ENCODE measurements at regions of chr6 and their contacts with region 1.

Region 1: DNA sequence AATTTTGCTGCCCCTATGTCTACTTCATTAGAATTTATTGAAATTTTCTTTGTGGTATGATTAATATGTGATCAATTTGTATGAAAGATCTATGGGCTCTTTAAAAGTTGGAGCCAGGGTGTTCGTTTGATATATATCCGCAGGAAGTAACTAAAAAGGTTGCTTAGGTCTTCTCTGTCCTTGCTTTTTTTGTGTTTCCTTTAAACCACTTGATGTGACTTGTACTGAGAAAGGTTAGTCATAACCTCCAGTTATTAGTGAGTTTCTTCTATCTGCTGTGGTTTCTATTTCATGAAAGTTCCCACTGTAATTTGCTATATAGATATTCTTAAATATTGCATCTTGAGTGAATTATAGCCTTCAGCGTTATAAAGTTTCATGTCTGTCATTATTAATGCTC is 585.3 kb upstream of the ARID1B start:
- DNase-seq: no peak
- ATAC-seq: peak; percentile 87
- H3K4me3 Mint-ChIP-seq: peak overlapping the region; percentile 26
- H3K27ac Mint-ChIP-seq: peak overlapping the region; percentile 74
- H3K4me1 Mint-ChIP-seq: peaks cover 42% of the 10 kb centered on the region
- H3K27me3 Mint-ChIP-seq: no peaks in the 10 kb centered on the region

Region 2: GRCh38 chr6:156174031-156174890 is 17.6 kb before region 1 on chr6:
- CTCF ChIA-PET with region 1: no interaction called
- POLR2A ChIA-PET with region 1: no interaction called
- intact Hi-C with region 1: loop called (anchors 1 kb)
- DNase-seq: peak; percentile 73
- ATAC-seq: peak; percentile 95
- H3K4me3 Mint-ChIP-seq: peak overlapping the region; percentile 9
- H3K27ac Mint-ChIP-seq: peak overlapping the region; percentile 88
- H3K4me1 Mint-ChIP-seq: peaks cover 27% of the 10 kb centered on the region
- H3K27me3 Mint-ChIP-seq: no peaks in the 10 kb centered on the region

Region 3: DNA sequence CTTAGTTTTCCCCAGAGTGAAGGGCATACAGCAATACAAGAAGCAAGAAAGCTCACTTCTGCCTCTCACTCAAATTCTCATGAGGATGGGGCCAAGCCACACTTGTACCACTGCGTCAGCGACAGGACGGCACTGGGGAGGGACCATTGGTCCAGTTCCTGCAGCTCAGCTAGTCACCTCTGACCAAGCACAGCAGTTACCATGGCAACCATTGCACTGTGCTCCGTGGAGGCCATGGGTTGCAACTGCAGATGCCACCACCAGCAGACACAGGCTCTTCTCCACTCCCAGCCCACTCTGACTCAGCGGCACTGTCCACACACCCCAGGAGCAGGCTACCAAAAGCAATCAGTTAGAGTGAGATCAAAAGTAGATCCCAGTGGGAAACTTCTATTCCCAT is 144.2 kb after region 1 on chr6:
- CTCF ChIA-PET with region 1: no interaction called
- POLR2A ChIA-PET with region 1: no interaction called
- intact Hi-C with region 1: no loop called
- DNase-seq: no peak
- ATAC-seq: no peak
- H3K4me3 Mint-ChIP-seq: no peak overlapping the region
- H3K27ac Mint-ChIP-seq: no peak overlapping the region
- H3K4me1 Mint-ChIP-seq: no peaks in the 10 kb centered on the region
- H3K27me3 Mint-ChIP-seq: no peaks in the 10 kb centered on the region

Measured in activated CD4-positive, alpha-beta T cell treated with anti-CD3 and anti-CD28 coated beads for 36 hours (primary cell).